ENCODE measurements at regions of chr3 and their contacts with region 1.

Region 1: DNA sequence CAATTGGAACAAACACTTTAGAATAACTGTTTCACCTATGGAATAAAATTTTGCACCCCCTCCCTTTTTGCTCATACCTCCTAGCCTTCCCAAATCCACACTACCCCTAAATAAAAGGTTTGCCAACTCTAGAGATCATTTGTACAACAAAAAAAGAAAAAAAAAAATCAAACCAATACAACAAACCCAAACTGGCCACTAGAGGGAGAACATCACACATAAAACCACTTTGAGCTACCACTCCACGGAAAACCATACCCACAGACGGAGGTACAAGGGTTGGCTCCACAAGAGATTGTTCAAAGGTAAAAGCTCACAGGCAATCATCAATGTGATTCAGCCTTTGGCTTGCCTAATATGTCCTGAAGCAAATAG is 47.6 kb downstream of the SETMAR start:
- DNase-seq: peak; percentile 47
- H3K4me3 ChIP-seq: no peak overlapping the region
- H3K27ac ChIP-seq: no peak overlapping the region
- H3K27me3 ChIP-seq: no peaks in the 10 kb centered on the region
- CTCF ChIP-seq: peak; percentile 81

Region 2: GRCh38 chr3:3998140-3998922 is 352.4 kb before region 1 on chr3:
- CTCF ChIA-PET with region 1: no interaction called
- POLR2A ChIA-PET with region 1: no interaction called
- DNase-seq: no peak
- H3K4me3 ChIP-seq: no peak overlapping the region
- H3K27ac ChIP-seq: no peak overlapping the region
- H3K27me3 ChIP-seq: no peaks in the 10 kb centered on the region
- CTCF ChIP-seq: no peak

Region 3: GRCh38 chr3:4340411-4341335 is 10.1 kb before region 1 on chr3:
- CTCF ChIA-PET with region 1: interaction called, 56 read pairs
- POLR2A ChIA-PET with region 1: no interaction called
- DNase-seq: no peak
- H3K4me3 ChIP-seq: no peak overlapping the region
- H3K27ac ChIP-seq: no peak overlapping the region
- H3K27me3 ChIP-seq: no peaks in the 10 kb centered on the region
- CTCF ChIP-seq: no peak

Region 4: GRCh38 chr3:4398120-4398940 is 47.6 kb after region 1 on chr3:
- CTCF ChIA-PET with region 1: interaction called, 16 read pairs
- POLR2A ChIA-PET with region 1: no interaction called
- DNase-seq: no peak
- H3K4me3 ChIP-seq: no peak overlapping the region
- H3K27ac ChIP-seq: no peak overlapping the region
- H3K27me3 ChIP-seq: no peaks in the 10 kb centered on the region
- CTCF ChIP-seq: no peak

Region 5: DNA sequence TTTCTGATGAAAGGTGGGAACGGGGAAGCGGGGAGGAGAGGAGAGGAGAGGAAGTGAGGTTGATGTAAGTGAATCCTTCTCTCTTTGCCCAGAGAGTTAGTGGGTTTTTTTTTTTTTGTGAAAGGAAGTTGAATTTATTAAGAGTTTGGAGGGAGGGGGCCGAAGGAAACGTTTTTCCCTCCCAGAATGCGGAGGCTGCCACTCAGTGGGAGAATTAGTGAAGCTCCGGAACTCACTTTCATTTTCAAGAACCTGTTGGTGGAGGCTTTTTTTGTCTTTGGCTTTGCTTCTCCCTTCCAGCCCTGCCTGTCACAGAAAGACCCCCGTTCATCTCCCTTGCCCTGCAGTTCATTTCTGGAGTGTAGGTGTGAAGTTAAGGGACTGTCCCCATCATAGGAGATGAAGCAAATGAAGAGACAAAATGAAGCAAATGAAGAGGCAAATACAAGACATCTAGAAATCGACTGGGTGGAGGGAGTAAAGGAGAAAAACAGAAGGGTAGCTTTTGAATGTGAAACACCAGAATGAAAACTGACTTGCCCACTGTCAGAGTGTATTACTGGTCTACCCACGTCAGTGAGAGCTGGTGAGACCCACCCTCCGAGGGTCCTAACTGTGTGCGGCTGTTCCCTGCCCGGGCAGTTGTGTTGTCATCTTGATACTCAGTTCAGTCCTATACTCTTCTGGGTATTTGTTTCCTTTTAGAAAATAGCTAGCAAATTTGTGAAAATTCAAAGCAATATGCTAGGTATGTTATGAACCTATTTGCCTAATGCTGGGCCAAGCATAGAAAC is 233.9 kb after region 1 on chr3:
- CTCF ChIA-PET with region 1: interaction called, 35 read pairs
- POLR2A ChIA-PET with region 1: interaction called, 4 read pairs
- DNase-seq: no peak
- H3K4me3 ChIP-seq: peak overlapping the region; percentile 42
- H3K27ac ChIP-seq: peak overlapping the region; percentile 31
- H3K27me3 ChIP-seq: no peaks in the 10 kb centered on the region
- CTCF ChIP-seq: peak; percentile 18; the same call in 1 of the 2 replicates

Region 6: GRCh38 chr3:4642611-4643010 is 291.8 kb after region 1 on chr3:
- CTCF ChIA-PET with region 1: interaction called, 38 read pairs
- POLR2A ChIA-PET with region 1: no interaction called
- DNase-seq: no peak
- H3K4me3 ChIP-seq: no peak overlapping the region
- H3K27ac ChIP-seq: no peak overlapping the region
- H3K27me3 ChIP-seq: peaks cover 2% of the 10 kb centered on the region
- CTCF ChIP-seq: no peak

Measured in AG04450 (cell line).